Mammary epithelial cell (primary cell): ENCODE measurements at regions of chr1 and their contacts with region 1.

Region 1: DNA sequence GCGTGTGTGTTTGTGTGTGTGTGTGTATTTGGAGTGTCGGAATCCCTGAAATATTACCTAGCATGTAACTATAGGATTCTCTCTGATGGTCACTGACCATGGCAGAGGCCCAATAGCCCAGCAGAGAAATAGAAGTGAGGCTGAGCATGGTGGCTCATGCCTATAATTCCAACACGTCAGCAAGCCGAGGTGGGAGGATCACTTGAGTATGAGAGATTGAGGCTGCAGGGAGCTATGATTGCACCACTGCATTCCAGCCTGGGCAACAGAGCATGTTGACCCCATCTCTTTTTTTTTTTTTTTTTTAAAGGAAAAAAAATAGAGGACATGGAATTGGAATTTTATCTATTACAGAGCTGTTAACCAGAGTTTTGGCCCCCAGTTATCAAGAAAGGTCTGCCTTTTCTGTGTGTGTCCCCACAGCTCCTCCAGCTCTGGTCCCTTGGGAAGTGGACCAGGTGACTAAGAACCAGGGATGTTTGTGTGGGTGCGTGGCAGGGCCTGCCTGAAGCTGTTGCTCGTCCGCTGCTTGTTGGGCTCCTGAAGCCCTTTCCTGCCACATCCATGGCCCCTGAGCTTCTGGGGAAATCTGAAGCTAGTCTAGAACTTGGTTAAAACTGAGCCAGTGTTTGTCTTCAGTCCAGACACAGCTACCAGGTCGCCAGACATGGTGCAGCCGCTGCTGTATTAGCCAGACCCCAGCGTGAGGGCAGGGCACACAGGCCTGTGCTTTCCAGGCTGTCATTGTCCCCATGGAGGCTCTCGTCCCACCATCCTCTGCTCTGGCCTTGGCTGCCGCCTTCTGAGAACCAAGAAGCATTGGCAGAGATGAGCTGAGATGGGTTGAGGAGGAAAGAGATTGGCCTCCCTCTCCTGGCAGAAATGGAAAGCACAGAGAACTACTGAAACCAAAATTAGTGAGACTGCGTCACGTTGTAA is 25.5 kb downstream of the CAPN9 start:
- DNase-seq: peak; percentile 25
- H3K4me3 ChIP-seq: no peak overlapping the region
- H3K27ac ChIP-seq: no peak overlapping the region
- H3K4me1 ChIP-seq: peaks cover 9% of the 10 kb centered on the region
- H3K27me3 ChIP-seq: peaks cover 3% of the 10 kb centered on the region
- CTCF ChIP-seq: peak in 1 of 2 donors; percentile 49

Region 2: DNA sequence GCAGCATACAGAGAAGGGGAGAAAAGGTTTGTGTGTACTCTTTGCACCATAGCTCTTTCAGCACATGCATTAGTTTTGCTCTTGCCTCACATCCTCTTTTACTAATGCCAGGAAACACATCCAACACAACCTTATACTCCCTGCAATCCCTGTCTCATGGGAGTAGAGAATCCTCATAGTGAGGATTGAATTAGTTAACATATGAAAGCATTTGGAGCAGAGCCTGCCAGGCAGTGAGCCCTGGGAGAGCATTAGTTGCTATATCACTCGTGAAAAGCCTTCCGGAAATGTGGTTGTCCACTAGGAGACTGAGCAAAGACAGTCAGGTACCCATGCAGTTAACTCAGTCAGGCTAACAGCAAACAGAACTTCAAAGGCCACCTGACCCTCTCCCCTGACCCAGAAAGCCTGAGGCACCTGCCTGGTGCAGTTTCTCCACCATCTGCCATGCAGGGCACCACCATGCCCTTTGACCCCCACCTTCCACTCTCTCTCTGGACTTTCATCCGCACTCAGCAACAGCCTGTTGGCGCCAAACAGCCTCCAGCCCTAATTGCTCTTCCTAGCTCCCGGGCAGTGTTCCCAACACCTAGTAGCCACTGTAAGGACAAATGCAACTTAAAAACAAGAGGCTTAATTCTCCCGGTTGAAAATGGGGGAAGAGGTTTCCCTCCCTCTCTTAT is 43.9 kb before region 1 on chr1:
- CTCF ChIA-PET with region 1: no interaction called
- dilution Hi-C with region 1: loop called (anchors 5 kb)
- in situ Hi-C with region 1: no loop called
- intact Hi-C with region 1: no loop called
- DNase-seq: no peak
- H3K4me3 ChIP-seq: no peak overlapping the region
- H3K27ac ChIP-seq: no peak overlapping the region
- H3K4me1 ChIP-seq: no peaks in the 10 kb centered on the region
- H3K27me3 ChIP-seq: peaks cover 2% of the 10 kb centered on the region
- CTCF ChIP-seq: no peak

Region 3: DNA sequence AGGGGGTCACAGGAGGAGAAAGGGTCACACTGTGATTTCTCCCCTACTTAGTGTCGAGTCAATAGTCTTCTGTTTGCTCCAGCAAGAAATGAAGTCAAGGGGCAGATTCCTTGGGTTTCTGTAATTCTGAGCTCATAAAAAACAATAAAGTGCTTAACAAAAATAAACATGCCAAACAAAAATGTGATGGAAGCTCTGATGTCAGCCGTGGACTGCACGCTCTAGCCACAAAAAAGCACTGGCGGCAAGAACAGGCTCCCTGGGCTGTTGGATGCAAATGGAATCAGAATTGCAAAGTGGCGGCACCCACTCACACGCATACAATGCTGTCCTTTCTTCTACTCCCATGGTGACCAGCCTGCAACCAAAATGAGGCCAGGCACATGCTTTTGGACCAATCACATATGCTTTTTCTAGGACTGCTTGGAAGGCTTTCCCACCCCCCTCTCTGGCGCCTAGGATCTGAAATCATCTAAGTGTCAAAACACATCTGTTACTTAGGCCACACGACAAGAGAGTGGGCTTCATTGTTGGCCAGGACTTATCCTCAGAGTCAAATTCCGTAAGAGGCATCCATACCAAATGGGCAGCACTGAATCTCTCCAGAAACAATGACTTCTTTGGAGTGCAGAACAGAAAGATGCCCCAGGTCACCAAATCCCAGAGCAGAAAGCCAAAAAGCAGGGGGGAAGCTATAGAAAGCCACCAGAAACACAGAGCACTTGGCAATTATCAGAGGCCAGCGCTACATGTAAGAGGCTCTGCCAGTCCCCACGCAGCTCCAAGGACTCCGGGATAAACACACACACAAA is 86.4 kb after region 1 on chr1:
- CTCF ChIA-PET with region 1: no interaction called
- dilution Hi-C with region 1: no loop called
- in situ Hi-C with region 1: no loop called
- intact Hi-C with region 1: no loop called
- DNase-seq: no peak
- H3K4me3 ChIP-seq: no peak overlapping the region
- H3K27ac ChIP-seq: no peak overlapping the region
- H3K4me1 ChIP-seq: no peaks in the 10 kb centered on the region
- H3K27me3 ChIP-seq: no peaks in the 10 kb centered on the region
- CTCF ChIP-seq: no peak